PC-3 (cell line): ENCODE measurements at regions of chr17 and their contacts with region 1.

Region 1: GRCh38 chr17:72233986-72234385 is 113.2 kb downstream of the SOX9 start:
- DNase-seq: no peak
- ATAC-seq: peak; percentile 76
- H3K4me3 ChIP-seq: no peak overlapping the region
- H3K27ac ChIP-seq: no peak overlapping the region
- H3K4me1 ChIP-seq: no peaks in the 10 kb centered on the region
- H3K27me3 ChIP-seq: no peaks in the 10 kb centered on the region
- CTCF ChIP-seq: no peak

Region 2: GRCh38 chr17:72151565-72152391 is 82.2 kb before region 1 on chr17:
- CTCF ChIA-PET with region 1: no interaction called
- POLR2A ChIA-PET with region 1: no interaction called
- intact Hi-C with region 1: loop called (anchors 5 kb)
- DNase-seq: peak; percentile 97
- ATAC-seq: peak; percentile 92
- H3K4me3 ChIP-seq: peak overlapping the region; percentile 45
- H3K27ac ChIP-seq: peak overlapping the region; percentile 80
- H3K4me1 ChIP-seq: peaks cover 23% of the 10 kb centered on the region
- H3K27me3 ChIP-seq: no peaks in the 10 kb centered on the region
- CTCF ChIP-seq: no peak

Region 3: DNA sequence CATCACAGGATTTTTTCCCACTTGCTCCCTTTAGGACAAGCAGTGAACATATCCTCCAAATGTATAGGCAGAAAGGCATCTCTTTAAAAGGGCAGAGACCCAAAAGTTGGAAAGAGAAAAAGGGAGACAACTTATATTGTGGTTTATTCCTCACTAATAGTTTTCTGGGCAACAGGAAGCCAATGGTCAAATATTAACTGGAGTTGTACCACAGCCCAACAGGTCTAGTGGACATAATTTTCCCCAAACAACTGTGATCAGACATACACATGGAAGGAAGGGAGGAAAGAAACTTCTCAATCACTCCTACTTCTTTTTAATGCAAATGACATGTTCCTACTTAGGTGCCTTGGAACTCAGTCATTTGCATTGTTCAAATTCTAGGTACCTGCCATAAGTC is 34.7 kb before region 1 on chr17:
- CTCF ChIA-PET with region 1: no interaction called
- POLR2A ChIA-PET with region 1: no interaction called
- intact Hi-C with region 1: loop called (anchors 1 kb)
- DNase-seq: no peak
- ATAC-seq: no peak
- H3K4me3 ChIP-seq: no peak overlapping the region
- H3K27ac ChIP-seq: no peak overlapping the region
- H3K4me1 ChIP-seq: no peaks in the 10 kb centered on the region
- H3K27me3 ChIP-seq: no peaks in the 10 kb centered on the region
- CTCF ChIP-seq: no peak